ENCODE measurements at regions of chr19 and their contacts with region 1.

Region 1: DNA sequence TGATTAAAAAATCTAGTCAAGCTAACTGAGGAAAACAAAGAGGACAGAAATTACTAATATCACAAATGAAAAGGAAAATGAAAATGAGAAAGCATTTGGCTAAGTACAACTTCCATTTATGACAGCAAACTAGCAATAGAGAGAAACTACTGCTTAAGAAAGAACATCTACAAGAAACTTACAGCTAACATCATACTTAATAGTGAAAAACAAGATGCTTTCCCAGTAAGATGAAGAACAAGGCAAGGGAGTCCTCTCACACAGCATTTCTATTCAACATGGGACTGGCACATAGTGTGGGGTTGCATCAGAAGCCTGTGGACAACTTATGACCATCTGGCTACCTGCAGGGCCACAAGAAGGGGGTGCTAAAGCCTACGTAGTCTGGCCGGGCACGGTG is 39.3 kb downstream of the ZNF44 start:
- DNase-seq: no peak
- ATAC-seq: no peak
- H3K4me3 ChIP-seq: no peak overlapping the region
- H3K4me3 Mint-ChIP-seq: no peak overlapping the region
- H3K27ac ChIP-seq: no peak overlapping the region
- H3K27ac Mint-ChIP-seq: no peak overlapping the region
- H3K4me1 ChIP-seq: no peaks in the 10 kb centered on the region
- H3K4me1 Mint-ChIP-seq: no peaks in the 10 kb centered on the region
- H3K27me3 ChIP-seq: no peaks in the 10 kb centered on the region
- H3K27me3 Mint-ChIP-seq: no peaks in the 10 kb centered on the region
- CTCF ChIP-seq: no peak

Region 2: GRCh38 chr19:12244370-12244769 is 11.0 kb before region 1 on chr19:
- CTCF ChIA-PET with region 1: no interaction called
- POLR2A ChIA-PET with region 1: no interaction called
- intact Hi-C with region 1: loop called in 1 of 2 experiments (anchors 1 kb)
- DNase-seq: peak in 1 of 9 experiments; percentile 10
- ATAC-seq: no peak
- H3K4me3 ChIP-seq: no peak overlapping the region
- H3K4me3 Mint-ChIP-seq: no peak overlapping the region
- H3K27ac ChIP-seq: no peak overlapping the region
- H3K27ac Mint-ChIP-seq: no peak overlapping the region
- H3K4me1 ChIP-seq: no peaks in the 10 kb centered on the region
- H3K4me1 Mint-ChIP-seq: no peaks in the 10 kb centered on the region
- H3K27me3 ChIP-seq: no peaks in the 10 kb centered on the region
- H3K27me3 Mint-ChIP-seq: no peaks in the 10 kb centered on the region
- CTCF ChIP-seq: no peak